AG04450 (cell line): ENCODE measurements at regions of chr19 and their contacts with region 1.

Region 1: GRCh38 chr19:34082289-34083077 is 89.8 kb upstream of the LSM14A start:
- DNase-seq: no peak
- H3K4me3 ChIP-seq: no peak overlapping the region
- H3K27ac ChIP-seq: no peak overlapping the region
- H3K27me3 ChIP-seq: peaks cover 6% of the 10 kb centered on the region
- CTCF ChIP-seq: no peak

Region 2: GRCh38 chr19:34041925-34042521 is 40.5 kb before region 1 on chr19:
- CTCF ChIA-PET with region 1: interaction called, 12 read pairs
- POLR2A ChIA-PET with region 1: no interaction called
- DNase-seq: no peak
- H3K4me3 ChIP-seq: no peak overlapping the region
- H3K27ac ChIP-seq: no peak overlapping the region
- H3K27me3 ChIP-seq: no peaks in the 10 kb centered on the region
- CTCF ChIP-seq: peak; percentile 91